Esophagus squamous epithelium (tissue), 5 donors: ENCODE measurements at regions of chr3 and their contacts with region 1.

Region 1: DNA sequence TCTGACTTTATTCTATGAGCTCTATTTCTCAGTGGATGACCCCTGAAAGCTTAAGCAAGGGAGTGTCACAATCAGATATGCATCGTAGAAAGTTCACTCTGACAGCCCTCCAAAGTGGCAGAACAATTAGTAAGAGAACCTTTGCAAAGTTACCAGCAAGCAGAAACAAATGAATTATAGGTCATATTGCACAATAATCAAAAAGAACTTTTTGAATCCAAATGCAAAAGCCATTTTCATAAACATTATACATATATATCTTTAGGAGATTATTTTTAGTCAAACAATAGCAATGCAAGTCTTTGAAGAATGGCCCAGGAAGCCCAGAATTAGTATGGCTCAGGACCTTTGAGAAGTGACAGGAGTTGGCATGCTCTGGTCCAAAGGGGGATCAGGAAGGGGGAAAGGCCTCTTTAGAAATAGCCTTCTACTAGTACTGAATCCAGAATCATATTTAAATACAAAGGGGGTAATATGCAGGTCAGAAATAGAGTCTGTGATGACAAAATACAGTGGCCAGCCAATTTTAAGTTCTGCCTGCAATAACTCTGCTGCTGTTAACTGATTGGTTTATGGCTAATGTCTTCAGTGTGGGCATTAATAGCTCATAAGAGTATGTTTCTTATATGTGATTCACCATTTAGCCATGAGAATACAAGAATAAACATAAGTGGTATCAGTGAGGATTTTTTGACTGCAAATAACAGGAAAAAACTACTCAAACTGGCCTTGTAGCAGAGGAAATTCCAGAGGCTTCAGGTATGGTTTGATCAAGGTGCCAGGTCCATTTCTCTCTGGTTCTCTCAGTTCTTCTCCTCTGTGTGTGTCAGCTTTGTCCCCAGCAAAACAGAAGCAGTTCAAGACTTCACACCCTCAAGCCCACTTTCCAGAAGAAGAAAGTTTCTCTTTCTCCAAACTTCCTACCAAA is 17.0 kb upstream of the ITGB5 start:
- DNase-seq: no peak
- H3K4me3 ChIP-seq: no peak overlapping the region
- H3K27ac ChIP-seq: no peak overlapping the region
- H3K4me1 ChIP-seq: peaks cover 0 to 26% (median 4%) of the 10 kb centered on the region in 3 donors
- H3K27me3 ChIP-seq: no peaks in the 10 kb centered on the region
- CTCF ChIP-seq: no peak
- POLR2A ChIP-seq: no peak

Region 2: DNA sequence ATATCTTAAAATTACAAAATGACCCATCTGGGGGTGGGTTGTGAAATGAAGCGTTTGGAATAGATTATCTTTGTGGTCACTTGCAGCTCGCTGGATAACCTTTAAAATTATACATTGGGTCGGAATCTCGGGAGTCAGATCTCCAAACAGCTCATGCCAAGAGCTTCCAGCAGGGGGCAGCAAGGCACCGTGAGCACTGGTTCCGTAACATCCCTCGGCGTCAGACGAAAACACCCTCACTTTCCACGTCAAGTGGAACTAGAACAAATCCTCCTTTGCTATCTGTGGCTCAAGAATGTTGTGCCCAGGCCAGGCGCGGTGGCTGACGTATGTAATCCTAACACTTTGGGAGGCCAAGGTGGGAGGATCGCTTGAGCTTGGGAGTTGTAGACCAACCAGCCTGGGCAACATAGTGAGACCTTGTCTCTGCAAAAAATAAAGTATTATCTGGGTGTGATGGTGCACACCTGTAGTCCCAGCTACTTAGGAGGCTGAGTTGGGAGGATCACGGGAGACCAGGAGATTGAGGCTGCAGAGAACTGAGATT is 142.8 kb before region 1 on chr3:
- intact Hi-C with region 1: loop called (anchors 5 kb)
- DNase-seq: no peak
- H3K4me3 ChIP-seq: peak overlapping the region in 1 of 4 donors; percentile 27
- H3K27ac ChIP-seq: peak overlapping the region; percentile 3 to 70 (median 67)
- H3K4me1 ChIP-seq: peaks cover 4 to 19% (median 5%) of the 10 kb centered on the region in 3 donors
- H3K27me3 ChIP-seq: no peaks in the 10 kb centered on the region
- CTCF ChIP-seq: peak; percentile 77 to 97 (median 95)
- POLR2A ChIP-seq: no peak

Region 3: GRCh38 chr3:124775877-124776276 is 128.3 kb before region 1 on chr3:
- intact Hi-C with region 1: loop called (anchors 5 kb)
- DNase-seq: no peak
- H3K4me3 ChIP-seq: no peak overlapping the region
- H3K27ac ChIP-seq: no peak overlapping the region
- H3K4me1 ChIP-seq: peaks cover 17 to 59% (median 34%) of the 10 kb centered on the region in 3 donors
- H3K27me3 ChIP-seq: no peaks in the 10 kb centered on the region
- CTCF ChIP-seq: no peak
- POLR2A ChIP-seq: no peak